ENCODE measurements at regions of chr19 and their contacts with region 1.

Region 1: GRCh38 chr19:58451358-58452101 is at the start of gene ZNF324B:
- DNase-seq: peak; percentile 99
- H3K4me3 ChIP-seq: peak within 1 kb of the TSS; percentile 81
- H3K27ac ChIP-seq: peak within 1 kb of the TSS; percentile 39
- H3K4me1 ChIP-seq: no peaks in the 10 kb centered on the region
- H3K27me3 ChIP-seq: no peaks in the 10 kb centered on the region
- CTCF ChIP-seq: no peak
- total RNA-seq, gene ZNF324B: 6.8 and 7.9 TPM in 2 replicates

Region 2: GRCh38 chr19:58439576-58440554 is 11.7 kb before region 1 on chr19 and contains the start of gene ZNF132:
- CTCF ChIA-PET with region 1: no interaction called
- POLR2A ChIA-PET with region 1: no interaction called
- intact Hi-C with region 1: loop called (anchors 1 kb)
- DNase-seq: peak; percentile 100
- H3K4me3 ChIP-seq: peak within 1 kb of the TSS; percentile 53
- H3K27ac ChIP-seq: peak within 1 kb of the TSS; percentile 75
- H3K4me1 ChIP-seq: peaks cover 11% of the 10 kb centered on the region
- H3K27me3 ChIP-seq: no peaks in the 10 kb centered on the region
- CTCF ChIP-seq: no peak
- total RNA-seq, gene ZNF132: 9.1 and 9.2 TPM in 2 replicates